PC-3 (cell line): ENCODE measurements at regions of chr3 and their contacts with region 1.

Region 1: DNA sequence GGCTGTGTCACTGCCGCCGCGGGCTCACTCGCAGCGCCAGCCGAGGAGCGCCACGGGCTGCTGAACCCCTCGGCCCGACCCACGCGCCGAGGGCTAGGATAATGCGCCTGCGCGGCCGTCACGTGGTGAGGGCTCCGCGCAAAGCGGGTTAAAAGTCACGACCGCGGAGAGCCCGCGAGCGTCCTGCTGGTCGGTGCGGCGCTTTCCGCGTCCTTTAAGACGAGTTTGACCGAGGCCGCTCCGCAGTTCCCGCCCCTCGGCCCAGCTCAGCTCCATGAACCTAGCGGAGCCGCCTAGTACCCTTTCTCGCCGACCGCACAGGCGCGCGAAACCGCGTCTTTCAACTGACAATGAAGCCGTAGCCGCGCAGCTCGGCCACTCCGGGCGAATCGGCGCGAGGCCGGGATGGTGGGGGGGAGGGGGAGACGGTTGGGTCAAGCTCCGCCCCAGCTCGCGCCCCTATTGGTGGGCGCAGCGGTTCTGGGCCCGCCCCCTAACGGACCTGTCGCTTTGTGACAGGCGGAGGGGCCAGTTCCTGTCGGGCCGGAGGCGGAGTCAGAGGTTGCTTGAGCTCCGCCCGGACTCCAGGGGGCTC is 636 bp upstream of the STT3B start:
- DNase-seq: peak; percentile 99
- ATAC-seq: peak; percentile 87
- H3K4me3 ChIP-seq: peak overlapping the region; percentile 98
- H3K27ac ChIP-seq: peak overlapping the region; percentile 96
- H3K4me1 ChIP-seq: peaks cover 28% of the 10 kb centered on the region
- H3K27me3 ChIP-seq: no peaks in the 10 kb centered on the region
- CTCF ChIP-seq: no peak

Region 2: DNA sequence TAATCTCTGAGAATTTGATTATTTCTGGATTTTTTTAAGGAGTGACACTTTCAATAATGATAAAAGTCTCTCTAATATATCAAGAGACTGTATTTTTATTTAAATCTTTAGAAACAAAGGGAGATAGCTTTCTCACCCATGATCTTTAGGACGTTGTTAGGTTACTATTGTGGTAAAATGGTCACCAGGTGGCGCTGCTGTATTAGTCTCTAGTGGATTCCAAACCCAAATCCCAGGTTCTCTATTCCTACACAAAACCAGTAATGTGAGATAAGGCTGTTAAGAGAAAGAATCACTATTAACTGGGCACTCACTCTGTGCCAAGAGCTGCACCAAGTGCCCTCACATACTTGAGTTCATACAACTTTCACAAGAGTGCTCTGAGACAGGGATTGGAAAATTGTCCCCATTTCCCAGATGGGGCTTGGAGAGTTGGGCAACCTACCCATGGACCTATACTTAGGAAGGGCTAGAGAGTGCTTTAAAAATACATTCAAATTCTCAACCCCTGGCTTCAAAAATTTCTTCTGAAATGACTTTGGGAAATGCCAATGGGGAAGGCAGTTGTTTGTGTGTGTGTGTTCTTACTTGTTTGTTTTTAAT is 1519.0 kb before region 1 on chr3:
- CTCF ChIA-PET with region 1: no interaction called
- POLR2A ChIA-PET with region 1: no interaction called
- intact Hi-C with region 1: loop called (anchors 10 kb)
- DNase-seq: peak; percentile 92
- ATAC-seq: peak; percentile 89
- H3K4me3 ChIP-seq: no peak overlapping the region
- H3K27ac ChIP-seq: no peak overlapping the region
- H3K4me1 ChIP-seq: peaks cover 8% of the 10 kb centered on the region
- H3K27me3 ChIP-seq: no peaks in the 10 kb centered on the region
- CTCF ChIP-seq: peak; percentile 94

Region 3: GRCh38 chr3:31166249-31166885 is 365.7 kb before region 1 on chr3:
- CTCF ChIA-PET with region 1: no interaction called
- POLR2A ChIA-PET with region 1: interaction called, 3 read pairs
- intact Hi-C with region 1: loop called (anchors 1 kb)
- DNase-seq: peak; percentile 92
- ATAC-seq: peak; percentile 90
- H3K4me3 ChIP-seq: peak overlapping the region; percentile 19; the same call in 1 of the 2 replicates
- H3K27ac ChIP-seq: peak overlapping the region; percentile 52
- H3K4me1 ChIP-seq: peaks cover 28% of the 10 kb centered on the region
- H3K27me3 ChIP-seq: no peaks in the 10 kb centered on the region
- CTCF ChIP-seq: no peak

Region 4: DNA sequence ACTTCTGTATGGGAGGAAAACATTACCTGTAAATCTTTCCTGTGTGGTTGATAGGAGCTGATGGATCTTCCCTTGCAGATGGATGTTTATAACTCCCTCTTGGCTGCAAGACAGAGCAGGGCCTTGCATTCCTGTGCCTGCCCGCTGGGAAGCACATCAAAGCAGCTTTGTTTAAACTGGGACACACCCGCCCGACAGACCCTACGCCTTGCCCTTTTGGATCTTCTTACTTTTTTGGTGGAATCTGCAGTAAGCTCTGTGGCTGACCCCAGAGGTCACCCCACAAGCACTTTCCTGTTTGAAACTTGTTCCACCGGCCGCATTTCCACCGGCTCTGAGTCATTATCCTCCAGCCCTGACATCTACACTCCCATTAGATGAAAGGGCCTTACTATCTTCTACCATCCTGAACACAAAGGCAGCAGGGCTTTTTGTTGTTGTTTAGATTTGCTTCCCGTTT is 243.4 kb before region 1 on chr3:
- CTCF ChIA-PET with region 1: no interaction called
- POLR2A ChIA-PET with region 1: interaction called, 7 read pairs
- intact Hi-C with region 1: loop called (anchors 2 kb)
- DNase-seq: peak; percentile 96
- ATAC-seq: peak; percentile 91
- H3K4me3 ChIP-seq: no peak overlapping the region
- H3K27ac ChIP-seq: peak overlapping the region; percentile 71
- H3K4me1 ChIP-seq: peaks cover 57% of the 10 kb centered on the region
- H3K27me3 ChIP-seq: no peaks in the 10 kb centered on the region
- CTCF ChIP-seq: no peak

Region 5: DNA sequence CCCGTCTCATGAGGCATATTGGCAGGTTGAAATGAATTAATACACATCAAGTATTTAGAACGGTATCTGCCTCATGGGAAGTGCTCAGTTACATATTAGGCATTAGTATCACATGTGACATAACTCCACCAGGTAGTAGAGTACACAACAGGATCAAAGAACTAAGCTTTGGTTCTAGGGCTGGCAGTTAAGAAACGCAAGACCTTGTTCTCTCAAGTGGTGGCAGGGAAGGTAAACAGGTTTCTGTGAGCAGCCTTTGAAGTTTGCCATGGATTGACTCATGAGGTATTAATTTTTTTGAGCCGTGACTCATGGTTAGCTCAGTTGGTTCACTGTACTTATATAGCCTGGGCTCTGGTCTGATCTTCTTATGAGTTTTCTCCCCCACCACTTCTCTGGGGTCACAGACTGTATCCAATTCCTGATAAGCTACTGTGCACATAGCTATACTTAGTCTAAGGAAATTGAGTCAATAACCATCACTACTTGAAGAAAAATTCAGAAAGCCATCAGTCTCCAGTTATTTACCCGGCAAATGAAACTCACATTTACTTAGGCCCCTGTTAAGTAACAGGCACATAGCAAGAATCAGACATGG is 154.9 kb before region 1 on chr3:
- CTCF ChIA-PET with region 1: interaction called, 4 read pairs
- POLR2A ChIA-PET with region 1: interaction called, 7 read pairs
- intact Hi-C with region 1: loop called (anchors 1 kb)
- DNase-seq: peak; percentile 98
- ATAC-seq: peak; percentile 99
- H3K4me3 ChIP-seq: no peak overlapping the region
- H3K27ac ChIP-seq: peak overlapping the region; percentile 44
- H3K4me1 ChIP-seq: peaks cover 19% of the 10 kb centered on the region
- H3K27me3 ChIP-seq: no peaks in the 10 kb centered on the region
- CTCF ChIP-seq: no peak

Region 6: DNA sequence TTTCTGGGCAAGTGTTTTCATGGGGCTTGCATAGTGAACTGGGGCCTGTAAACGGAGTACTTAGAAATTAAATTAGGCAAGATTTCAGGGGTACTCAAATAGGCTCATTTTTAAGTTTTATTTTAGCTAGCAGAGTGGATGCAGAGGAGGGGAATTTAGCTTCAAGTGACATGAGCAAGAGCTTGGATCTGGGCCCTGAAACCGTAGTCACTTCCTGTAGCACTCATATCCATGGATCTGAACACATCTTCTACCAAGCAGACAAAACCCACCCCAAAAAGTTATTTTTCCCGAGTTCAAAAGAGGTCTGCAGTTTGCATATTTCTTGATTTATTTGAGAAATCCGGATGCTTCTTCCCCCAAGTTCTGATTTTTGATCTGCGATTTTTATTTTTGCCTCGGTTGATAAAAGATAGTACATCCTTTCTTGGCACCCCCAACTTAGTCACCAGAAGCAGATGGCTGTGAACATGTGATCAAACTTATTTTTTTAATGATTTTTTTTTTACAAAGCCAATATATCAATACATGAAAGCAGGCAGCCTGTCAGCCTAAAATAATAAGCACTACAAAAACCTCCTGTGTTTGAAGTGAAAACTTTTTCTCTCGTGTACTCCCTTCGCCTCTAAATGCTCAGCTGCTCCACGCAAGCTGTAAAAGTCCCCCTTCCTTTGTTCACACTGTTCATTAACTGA is 36.0 kb before region 1 on chr3:
- CTCF ChIA-PET with region 1: no interaction called
- POLR2A ChIA-PET with region 1: no interaction called
- intact Hi-C with region 1: no loop called
- DNase-seq: peak; percentile 44
- ATAC-seq: peak; percentile 45
- H3K4me3 ChIP-seq: no peak overlapping the region
- H3K27ac ChIP-seq: no peak overlapping the region
- H3K4me1 ChIP-seq: peaks cover 7% of the 10 kb centered on the region; the same call in 1 of the 2 replicates
- H3K27me3 ChIP-seq: no peaks in the 10 kb centered on the region
- CTCF ChIP-seq: no peak